IMR-90 (cell line): ENCODE measurements at regions of chr2 and their contacts with region 1.

Region 1: DNA sequence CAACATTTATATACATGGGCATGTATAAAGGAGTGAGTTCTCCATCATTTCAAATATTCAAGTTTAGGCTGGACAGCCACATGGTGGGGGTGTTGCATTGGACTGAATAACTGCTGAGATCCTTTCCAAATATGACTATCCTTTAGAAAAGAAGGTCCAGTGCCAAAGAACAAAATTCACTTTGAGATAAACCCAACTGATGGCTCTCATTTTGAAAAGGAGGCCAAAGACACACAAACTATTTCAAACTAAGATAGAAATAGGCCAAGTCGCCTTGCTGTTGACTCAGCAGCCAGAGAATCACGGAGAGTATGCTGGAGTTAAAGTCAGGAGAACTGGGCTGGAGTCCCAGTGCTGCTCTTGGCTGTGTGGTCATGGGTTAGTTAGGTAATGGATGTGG is 204.5 kb upstream of the LRATD1 start:
- DNase-seq: peak; percentile 53
- ATAC-seq: peak; percentile 40; the same call in 1 of the 2 replicates
- H3K4me3 ChIP-seq: no peak overlapping the region
- H3K27ac ChIP-seq: no peak overlapping the region
- H3K4me1 ChIP-seq: no peaks in the 10 kb centered on the region
- H3K27me3 ChIP-seq: no peaks in the 10 kb centered on the region
- CTCF ChIP-seq: peak; percentile 44
- POLR2A ChIP-seq: no peak
- RAD21 ChIP-seq: peak; percentile 64

Region 2: DNA sequence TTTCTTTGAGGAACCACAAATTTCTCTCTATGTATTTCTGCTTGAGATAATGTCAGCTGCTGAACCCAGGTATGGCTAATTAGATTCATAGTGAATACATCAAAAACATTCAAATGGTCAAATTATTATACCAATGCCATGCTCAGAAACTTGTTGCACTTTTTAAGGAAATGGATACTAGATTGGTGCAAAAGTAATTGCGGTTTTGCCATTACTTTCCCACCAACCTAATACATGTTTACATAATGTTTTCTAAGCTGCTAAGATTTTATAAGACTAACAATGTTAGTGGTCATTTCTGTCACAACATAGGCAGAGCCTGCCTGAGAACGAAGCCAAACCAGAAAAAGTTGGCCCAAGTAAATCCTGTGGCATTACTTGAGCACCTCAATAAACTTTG is 363.7 kb before region 1 on chr2:
- CTCF ChIA-PET with region 1: no interaction called
- POLR2A ChIA-PET with region 1: no interaction called
- dilution Hi-C with region 1: no loop called
- in situ Hi-C with region 1: no loop called
- intact Hi-C with region 1: no loop called
- DNase-seq: no peak
- ATAC-seq: no peak
- H3K4me3 ChIP-seq: no peak overlapping the region
- H3K27ac ChIP-seq: no peak overlapping the region
- H3K4me1 ChIP-seq: no peaks in the 10 kb centered on the region
- H3K27me3 ChIP-seq: no peaks in the 10 kb centered on the region
- CTCF ChIP-seq: no peak
- POLR2A ChIP-seq: no peak
- RAD21 ChIP-seq: no peak

Region 3: DNA sequence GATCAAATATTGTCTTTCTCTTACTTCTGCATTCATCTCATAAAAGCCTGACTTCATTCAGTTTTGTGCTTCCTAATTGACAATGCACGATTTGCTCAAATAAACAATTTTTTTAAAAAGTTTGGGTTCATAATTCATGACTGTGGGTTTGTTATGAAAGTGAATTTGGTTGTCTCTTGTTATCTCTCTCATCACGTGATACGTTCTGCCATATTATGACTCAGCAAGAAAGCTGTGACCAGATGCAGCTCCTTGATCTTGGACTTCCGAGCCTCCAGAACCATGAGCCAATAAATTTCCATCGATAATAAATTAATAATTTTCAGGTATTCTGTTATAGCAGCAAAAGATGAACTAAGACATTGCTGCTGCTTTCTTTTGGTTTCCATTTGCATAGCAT is 47.9 kb after region 1 on chr2:
- CTCF ChIA-PET with region 1: no interaction called
- POLR2A ChIA-PET with region 1: no interaction called
- dilution Hi-C with region 1: no loop called
- in situ Hi-C with region 1: no loop called
- intact Hi-C with region 1: no loop called
- DNase-seq: no peak
- ATAC-seq: no peak
- H3K4me3 ChIP-seq: no peak overlapping the region
- H3K27ac ChIP-seq: no peak overlapping the region
- H3K4me1 ChIP-seq: no peaks in the 10 kb centered on the region
- H3K27me3 ChIP-seq: no peaks in the 10 kb centered on the region
- CTCF ChIP-seq: no peak
- POLR2A ChIP-seq: no peak
- RAD21 ChIP-seq: no peak

Region 4: GRCh38 chr2:14587139-14587538 is 159.1 kb after region 1 on chr2:
- CTCF ChIA-PET with region 1: no interaction called
- POLR2A ChIA-PET with region 1: no interaction called
- dilution Hi-C with region 1: no loop called
- in situ Hi-C with region 1: no loop called
- intact Hi-C with region 1: no loop called
- DNase-seq: peak; percentile 10
- ATAC-seq: peak; percentile 51; the same call in 1 of the 2 replicates
- H3K4me3 ChIP-seq: no peak overlapping the region
- H3K27ac ChIP-seq: no peak overlapping the region
- H3K4me1 ChIP-seq: no peaks in the 10 kb centered on the region
- H3K27me3 ChIP-seq: no peaks in the 10 kb centered on the region
- CTCF ChIP-seq: no peak
- POLR2A ChIP-seq: no peak
- RAD21 ChIP-seq: no peak

Region 5: GRCh38 chr2:15588329-15588919 is 1160.4 kb after region 1 on chr2:
- CTCF ChIA-PET with region 1: no interaction called
- POLR2A ChIA-PET with region 1: no interaction called
- dilution Hi-C with region 1: no loop called
- in situ Hi-C with region 1: loop called (anchors 10 kb)
- intact Hi-C with region 1: no loop called
- DNase-seq: peak; percentile 54
- ATAC-seq: no peak
- H3K4me3 ChIP-seq: no peak overlapping the region
- H3K27ac ChIP-seq: no peak overlapping the region
- H3K4me1 ChIP-seq: no peaks in the 10 kb centered on the region
- H3K27me3 ChIP-seq: peaks cover 3% of the 10 kb centered on the region; the same call in 1 of the 2 replicates
- CTCF ChIP-seq: peak; percentile 65
- POLR2A ChIP-seq: no peak
- RAD21 ChIP-seq: peak; percentile 68